Right ventricle myocardium superior (tissue), 1 donor: ENCODE measurements at regions of chr1 and their contacts with region 1.

Region 1: GRCh38 chr1:229227298-229227919 is 43.5 kb upstream of the RAB4A start:
- DNase-seq: peak; percentile 90
- ATAC-seq: peak; percentile 46

Region 2: GRCh38 chr1:228664399-228664914 is 563.0 kb before region 1 on chr1:
- intact Hi-C with region 1: loop called (anchors 10 kb)
- DNase-seq: peak; percentile 78
- ATAC-seq: peak; percentile 67

Region 3: DNA sequence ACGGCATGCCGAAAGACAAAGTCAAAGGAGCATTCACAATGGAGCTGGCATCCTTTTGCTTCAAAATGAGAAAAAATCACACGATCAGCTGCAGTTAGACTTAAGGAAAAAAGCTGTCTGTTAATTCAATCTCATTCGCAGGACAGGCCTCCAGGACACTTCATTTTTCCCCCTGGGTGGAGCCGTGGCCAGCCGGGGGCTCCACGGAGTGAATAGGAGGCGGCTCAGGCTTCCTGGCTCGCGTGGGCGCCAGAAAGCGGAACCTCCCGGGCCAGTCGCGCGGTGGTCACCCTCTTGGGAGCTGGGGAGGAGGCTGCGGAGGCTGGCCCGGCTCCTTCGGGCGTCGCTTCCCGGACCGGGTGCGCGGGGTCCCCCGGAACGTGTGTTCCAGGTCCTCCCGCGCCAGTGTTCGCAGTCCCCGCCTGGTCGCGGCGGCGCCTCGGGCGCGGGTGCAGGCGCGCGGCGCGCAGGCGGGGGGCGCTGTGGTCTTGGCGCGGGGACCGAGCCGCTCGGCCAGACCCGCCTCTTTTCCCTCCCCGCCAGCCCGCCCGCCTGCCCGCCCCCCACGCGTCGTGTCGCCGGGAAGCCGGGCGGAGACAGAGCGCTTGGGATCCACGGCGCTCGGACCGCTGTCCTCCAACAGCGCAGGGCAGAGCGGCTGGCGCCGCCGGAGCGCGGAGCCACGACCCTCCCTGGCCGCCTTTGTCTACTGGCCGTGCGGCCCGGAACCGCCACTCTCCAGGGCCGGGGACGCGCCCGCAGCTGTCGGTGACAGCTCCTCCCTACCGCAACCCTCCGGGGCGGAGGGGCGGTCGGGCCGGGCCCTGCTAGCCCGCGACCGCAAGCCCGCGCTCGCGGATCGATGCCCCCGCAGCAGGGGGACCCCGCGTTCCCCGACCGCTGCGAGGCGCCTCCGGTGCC is 492.3 kb before region 1 on chr1 and contains the start of gene RHOU:
- intact Hi-C with region 1: loop called (anchors 5 kb)
- DNase-seq: peak; percentile 87
- ATAC-seq: peak; percentile 97
- total RNA-seq, gene RHOU: 4.2 TPM

Region 4: GRCh38 chr1:229270547-229271447 is 43.4 kb after region 1 on chr1 and contains the start of gene RAB4A:
- intact Hi-C with region 1: no loop called
- DNase-seq: peak; percentile 91
- ATAC-seq: peak; percentile 95
- total RNA-seq, gene RAB4A: 103 TPM

Region 5: DNA sequence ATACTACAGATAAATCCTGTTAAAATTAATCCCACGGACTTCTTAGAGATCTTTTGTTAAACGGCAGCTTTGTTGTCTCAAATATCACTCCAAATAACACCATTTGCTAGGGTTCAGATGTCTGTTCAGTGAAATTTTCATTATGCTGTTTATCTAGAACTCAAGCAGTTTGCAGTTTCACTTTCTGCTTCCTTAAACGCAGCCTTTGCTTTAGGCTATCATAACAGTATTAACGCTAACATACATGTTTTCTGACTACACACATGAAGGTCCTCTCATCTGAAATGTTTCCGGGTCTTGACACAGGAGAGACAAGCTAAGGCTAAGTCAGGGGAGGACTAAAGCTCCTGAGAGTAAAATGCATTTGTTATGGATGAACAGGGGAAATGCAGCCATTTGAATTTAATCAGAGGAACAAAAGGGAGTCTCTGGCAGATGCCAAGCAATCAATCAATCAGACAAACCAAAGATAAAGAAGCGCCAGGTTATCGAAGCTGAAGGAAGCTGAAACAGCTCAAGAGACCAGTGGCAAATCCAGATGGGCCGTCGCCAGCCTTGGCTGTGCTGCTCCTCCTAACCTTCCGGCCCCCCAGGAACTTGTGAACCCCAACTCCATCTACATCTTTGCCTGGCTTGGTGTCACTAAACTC is 98.6 kb after region 1 on chr1:
- intact Hi-C with region 1: no loop called
- DNase-seq: no peak
- ATAC-seq: no peak